ENCODE measurements at regions of chr7 and their contacts with region 1.

Region 1: DNA sequence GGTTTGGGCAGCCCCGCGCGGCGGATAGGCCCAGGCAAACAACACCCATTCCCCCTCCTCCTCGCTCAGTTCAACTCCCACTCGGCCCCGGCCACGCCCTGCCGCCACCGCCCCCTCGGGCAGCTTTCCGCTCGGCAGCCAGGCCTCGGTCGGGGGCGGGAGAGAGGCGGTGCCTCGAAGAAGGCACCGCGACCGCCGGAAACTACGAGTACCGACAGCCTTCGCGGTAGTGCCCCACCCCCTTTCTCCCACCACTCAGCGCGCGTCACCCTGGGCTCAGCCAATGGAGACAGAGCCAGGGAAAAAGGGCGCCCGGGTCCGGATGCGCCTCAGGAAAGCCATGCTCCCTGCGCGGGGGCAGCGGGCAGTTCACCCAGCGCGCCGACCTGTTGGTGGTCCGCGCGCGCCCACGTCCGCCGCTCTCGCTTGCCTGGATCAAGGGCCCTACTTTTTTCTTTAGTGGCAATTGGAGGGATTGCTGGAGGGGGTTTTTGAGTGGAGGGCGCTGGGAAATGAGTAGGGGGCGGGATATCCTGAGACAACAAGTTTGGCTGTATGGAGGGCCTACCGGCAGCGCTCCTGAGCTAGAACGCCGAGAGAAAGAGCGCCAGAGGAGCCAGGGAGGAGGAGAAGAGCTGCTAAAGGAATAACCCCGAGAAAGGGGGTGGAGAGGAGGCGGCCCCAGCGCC is 557 bp upstream of the SP4 start:
- DNase-seq: peak; percentile 100
- H3K4me3 Mint-ChIP-seq: peak overlapping the region; percentile 100
- H3K27ac Mint-ChIP-seq: peak overlapping the region; percentile 100
- H3K4me1 Mint-ChIP-seq: peaks cover 67% of the 10 kb centered on the region
- H3K27me3 Mint-ChIP-seq: no peaks in the 10 kb centered on the region

Region 2: DNA sequence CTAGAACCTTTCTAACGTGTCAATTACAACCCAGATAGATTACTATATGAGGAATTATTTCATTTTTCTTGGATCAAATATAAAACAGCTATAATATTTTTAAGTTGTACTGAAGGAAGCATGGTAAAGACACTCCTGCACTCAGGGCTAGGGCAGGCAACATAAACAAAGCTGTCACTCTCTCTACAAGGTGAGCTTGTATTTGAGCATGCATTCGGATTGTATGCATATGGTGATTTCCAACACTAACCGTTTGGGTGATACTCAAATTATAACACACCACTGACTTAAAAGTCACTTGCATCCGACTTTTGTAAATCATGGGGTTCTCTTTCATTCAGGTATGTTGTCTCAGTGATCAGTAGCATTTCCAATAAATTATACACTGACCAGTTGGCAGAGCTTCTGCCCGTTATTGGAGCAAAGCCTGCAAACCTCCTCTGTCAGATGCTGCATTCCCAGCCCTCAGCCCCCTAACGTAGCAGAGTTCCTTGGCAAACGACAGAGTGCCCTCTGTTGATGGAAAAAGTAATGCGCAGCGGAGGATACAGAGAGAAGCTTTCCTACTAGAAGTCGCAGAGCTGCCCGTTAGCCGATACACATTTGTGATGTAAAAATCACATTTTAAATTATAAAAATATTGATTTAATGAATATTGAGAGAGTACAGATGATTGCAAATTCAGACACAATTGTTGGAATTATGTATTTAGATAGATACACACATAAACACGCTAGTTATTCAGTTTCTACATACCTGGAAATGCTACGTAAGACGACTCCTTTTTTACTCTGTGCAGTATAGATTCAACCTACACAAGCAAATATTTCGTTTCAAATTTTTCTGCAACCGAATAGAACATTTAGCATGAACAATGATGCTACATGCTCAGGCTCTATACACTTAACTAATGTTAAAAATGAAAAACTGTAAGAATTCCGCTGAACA is 173.3 kb before region 1 on chr7:
- intact Hi-C with region 1: loop called (anchors 1 kb)
- DNase-seq: peak; percentile 37
- H3K4me3 Mint-ChIP-seq: peak overlapping the region; percentile 74
- H3K27ac Mint-ChIP-seq: peak overlapping the region; percentile 32
- H3K4me1 Mint-ChIP-seq: peaks cover 21% of the 10 kb centered on the region
- H3K27me3 Mint-ChIP-seq: peaks cover 70% of the 10 kb centered on the region

Region 3: DNA sequence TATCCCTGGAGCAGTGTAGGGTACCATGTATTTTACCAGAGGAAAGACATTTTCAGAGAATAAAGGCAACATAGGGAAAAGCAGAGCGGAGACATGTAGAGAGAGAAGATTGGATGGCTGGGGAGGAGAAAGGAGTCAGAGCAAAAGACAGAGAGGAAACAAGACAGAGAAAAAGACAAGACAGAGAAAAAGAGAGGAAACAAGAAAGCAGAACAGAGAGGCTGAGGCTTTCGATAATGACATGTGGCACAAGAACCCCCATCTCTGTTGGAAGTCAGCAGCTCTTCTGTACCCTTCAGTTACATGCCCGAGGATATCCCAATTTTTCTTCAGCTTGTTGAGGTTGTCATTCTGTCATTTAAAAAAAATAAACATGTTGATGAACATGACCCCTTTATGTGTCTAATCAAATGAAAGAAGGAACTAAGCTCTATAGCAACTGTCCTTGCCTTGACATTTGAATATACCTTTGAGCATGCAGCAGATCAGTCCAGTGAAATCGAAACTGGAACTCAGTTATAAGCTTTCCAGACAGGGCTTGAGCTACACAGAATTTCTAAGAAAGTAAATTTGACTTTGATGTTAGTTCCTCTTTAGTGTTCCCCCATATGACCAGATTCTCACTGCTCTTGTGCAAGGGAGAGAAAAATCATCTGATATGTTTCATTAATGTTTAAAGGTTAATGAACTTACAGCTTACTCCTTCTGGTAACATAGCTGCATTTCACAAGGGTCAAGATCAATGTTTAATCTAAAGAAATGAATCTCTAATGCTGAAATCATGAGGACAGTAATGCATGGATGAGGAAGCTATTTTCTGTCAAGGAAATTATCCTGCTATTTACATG is 74.6 kb before region 1 on chr7:
- intact Hi-C with region 1: loop called (anchors 1 kb)
- DNase-seq: no peak
- H3K4me3 Mint-ChIP-seq: peak overlapping the region; percentile 67
- H3K27ac Mint-ChIP-seq: peak overlapping the region; percentile 96
- H3K4me1 Mint-ChIP-seq: peaks cover 69% of the 10 kb centered on the region
- H3K27me3 Mint-ChIP-seq: no peaks in the 10 kb centered on the region

Region 4: GRCh38 chr7:21412410-21412851 is 14.9 kb before region 1 on chr7:
- intact Hi-C with region 1: loop called (anchors 2 kb)
- DNase-seq: peak; percentile 21
- H3K4me3 Mint-ChIP-seq: peak overlapping the region; percentile 50
- H3K27ac Mint-ChIP-seq: peak overlapping the region; percentile 90
- H3K4me1 Mint-ChIP-seq: peaks cover 70% of the 10 kb centered on the region
- H3K27me3 Mint-ChIP-seq: peaks cover 2% of the 10 kb centered on the region

Region 5: GRCh38 chr7:21542891-21543527 is 115.7 kb after region 1 on chr7 and contains the start of gene DNAH11:
- intact Hi-C with region 1: loop called (anchors 1 kb)
- DNase-seq: peak; percentile 21
- H3K4me3 Mint-ChIP-seq: peak within 1 kb of the TSS; percentile 81
- H3K27ac Mint-ChIP-seq: peak within 1 kb of the TSS; percentile 44
- H3K4me1 Mint-ChIP-seq: peaks cover 22% of the 10 kb centered on the region
- H3K27me3 Mint-ChIP-seq: peaks cover 41% of the 10 kb centered on the region
- total RNA-seq, gene DNAH11: 1.3 and 1.7 TPM in 2 replicates

Region 6: GRCh38 chr7:22001345-22002004 is 574.1 kb after region 1 on chr7:
- intact Hi-C with region 1: loop called (anchors 5 kb)
- DNase-seq: no peak
- H3K4me3 Mint-ChIP-seq: no peak overlapping the region
- H3K27ac Mint-ChIP-seq: no peak overlapping the region
- H3K4me1 Mint-ChIP-seq: peaks cover 7% of the 10 kb centered on the region
- H3K27me3 Mint-ChIP-seq: peaks cover 8% of the 10 kb centered on the region

Region 7: DNA sequence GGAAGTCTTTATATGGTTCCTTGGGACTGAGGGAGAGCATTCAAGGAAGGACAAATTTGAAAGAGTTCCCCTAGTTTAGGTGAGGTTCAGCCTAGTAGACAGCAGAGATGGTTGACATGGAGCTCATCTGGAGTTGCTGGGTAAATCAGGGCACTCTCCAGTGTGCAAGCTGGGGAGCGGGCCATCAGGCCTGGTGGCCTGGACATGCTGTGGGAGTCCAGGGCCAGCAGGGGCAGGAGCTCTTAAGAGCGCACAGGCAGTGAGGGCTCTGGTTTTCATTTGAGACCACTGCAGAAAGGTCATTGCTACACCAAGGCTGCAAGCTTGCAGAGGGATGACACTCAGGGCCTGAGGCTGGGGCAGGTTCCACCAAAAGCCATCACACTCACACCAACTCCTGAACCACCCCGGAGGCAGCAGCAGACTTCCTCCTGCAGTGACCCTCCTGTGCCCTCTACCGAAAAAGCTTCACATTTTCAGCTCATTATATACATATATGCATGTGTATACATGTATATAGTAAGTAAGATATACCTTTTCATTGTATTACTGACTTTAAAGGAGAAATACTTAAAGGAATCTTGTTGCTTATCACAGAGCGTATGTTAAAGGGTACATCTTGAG is 1033.1 kb after region 1 on chr7:
- intact Hi-C with region 1: no loop called
- DNase-seq: no peak
- H3K4me3 Mint-ChIP-seq: no peak overlapping the region
- H3K27ac Mint-ChIP-seq: no peak overlapping the region
- H3K4me1 Mint-ChIP-seq: no peaks in the 10 kb centered on the region
- H3K27me3 Mint-ChIP-seq: peaks cover 9% of the 10 kb centered on the region